IMR-90 (cell line): ENCODE measurements at regions of chr16 and their contacts with region 1.

Region 1: DNA sequence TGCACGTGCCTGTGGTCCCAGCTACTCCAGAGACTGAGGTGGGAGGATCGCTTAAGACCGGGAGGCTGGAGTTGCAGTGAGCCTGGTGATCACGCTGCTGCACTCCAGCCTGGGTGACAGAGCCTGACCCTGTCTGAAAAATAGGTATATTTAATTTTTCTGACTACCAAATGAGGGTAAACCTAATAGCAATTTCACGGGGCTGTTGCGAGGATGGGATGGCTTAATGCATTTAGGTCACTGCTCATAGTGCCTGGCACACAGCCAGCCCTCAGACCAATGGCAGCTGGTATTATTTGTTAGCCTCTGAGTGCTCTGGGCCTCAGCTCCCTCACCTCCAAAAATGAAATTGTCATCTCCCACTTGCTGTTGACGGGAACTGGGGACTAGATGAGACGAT is 5.9 kb upstream of the CDIP1 start:
- DNase-seq: no peak
- ATAC-seq: no peak
- H3K4me3 ChIP-seq: no peak overlapping the region
- H3K27ac ChIP-seq: no peak overlapping the region
- H3K4me1 ChIP-seq: no peaks in the 10 kb centered on the region
- H3K27me3 ChIP-seq: peaks cover 18% of the 10 kb centered on the region
- CTCF ChIP-seq: no peak
- POLR2A ChIP-seq: no peak
- RAD21 ChIP-seq: no peak

Region 2: DNA sequence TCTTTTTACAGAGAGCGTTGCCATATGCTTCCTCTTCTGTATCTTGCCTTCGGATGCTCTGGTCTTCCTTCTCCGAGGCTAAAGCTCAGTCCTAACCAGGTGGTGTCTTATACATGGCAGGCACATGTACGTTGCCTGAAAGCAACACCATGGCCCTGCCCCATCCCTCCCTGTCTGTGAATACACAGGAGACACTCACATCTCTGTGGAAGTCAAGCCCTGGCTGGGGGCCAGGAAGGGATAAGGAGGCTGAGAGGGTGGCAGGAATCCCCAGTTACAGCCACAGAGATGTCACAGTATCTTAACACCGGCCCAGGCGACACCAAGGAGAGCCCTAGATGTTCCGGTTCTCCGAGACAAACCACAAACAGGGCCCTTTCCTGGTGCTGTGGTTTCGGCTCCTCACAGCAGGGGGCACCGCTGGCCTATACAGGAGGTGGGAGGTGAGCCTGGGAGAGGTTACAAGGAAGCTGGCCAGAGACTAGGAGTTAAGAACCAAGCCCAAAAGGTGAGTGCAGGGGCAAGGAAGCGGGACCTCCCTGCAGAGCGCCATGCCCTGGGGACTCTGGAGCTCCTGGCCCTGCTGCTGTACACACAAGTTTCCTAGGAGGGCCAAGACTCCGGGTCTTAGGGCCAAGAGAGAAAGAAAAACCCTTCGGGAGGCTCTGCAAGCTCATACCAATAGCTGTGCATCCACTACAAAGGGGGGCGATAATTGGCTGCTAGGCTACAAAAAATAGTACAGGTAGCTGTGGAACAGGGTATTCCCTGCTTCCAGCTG is 344.3 kb before region 1 on chr16:
- CTCF ChIA-PET with region 1: no interaction called
- POLR2A ChIA-PET with region 1: no interaction called
- dilution Hi-C with region 1: no loop called
- in situ Hi-C with region 1: no loop called
- intact Hi-C with region 1: no loop called
- DNase-seq: peak; percentile 60
- ATAC-seq: peak; percentile 98
- H3K4me3 ChIP-seq: no peak overlapping the region
- H3K27ac ChIP-seq: no peak overlapping the region
- H3K4me1 ChIP-seq: peaks cover 7% of the 10 kb centered on the region
- H3K27me3 ChIP-seq: no peaks in the 10 kb centered on the region
- CTCF ChIP-seq: peak; percentile 87
- POLR2A ChIP-seq: no peak; the same call in 1 of the 2 replicates
- RAD21 ChIP-seq: peak; percentile 93

Region 3: DNA sequence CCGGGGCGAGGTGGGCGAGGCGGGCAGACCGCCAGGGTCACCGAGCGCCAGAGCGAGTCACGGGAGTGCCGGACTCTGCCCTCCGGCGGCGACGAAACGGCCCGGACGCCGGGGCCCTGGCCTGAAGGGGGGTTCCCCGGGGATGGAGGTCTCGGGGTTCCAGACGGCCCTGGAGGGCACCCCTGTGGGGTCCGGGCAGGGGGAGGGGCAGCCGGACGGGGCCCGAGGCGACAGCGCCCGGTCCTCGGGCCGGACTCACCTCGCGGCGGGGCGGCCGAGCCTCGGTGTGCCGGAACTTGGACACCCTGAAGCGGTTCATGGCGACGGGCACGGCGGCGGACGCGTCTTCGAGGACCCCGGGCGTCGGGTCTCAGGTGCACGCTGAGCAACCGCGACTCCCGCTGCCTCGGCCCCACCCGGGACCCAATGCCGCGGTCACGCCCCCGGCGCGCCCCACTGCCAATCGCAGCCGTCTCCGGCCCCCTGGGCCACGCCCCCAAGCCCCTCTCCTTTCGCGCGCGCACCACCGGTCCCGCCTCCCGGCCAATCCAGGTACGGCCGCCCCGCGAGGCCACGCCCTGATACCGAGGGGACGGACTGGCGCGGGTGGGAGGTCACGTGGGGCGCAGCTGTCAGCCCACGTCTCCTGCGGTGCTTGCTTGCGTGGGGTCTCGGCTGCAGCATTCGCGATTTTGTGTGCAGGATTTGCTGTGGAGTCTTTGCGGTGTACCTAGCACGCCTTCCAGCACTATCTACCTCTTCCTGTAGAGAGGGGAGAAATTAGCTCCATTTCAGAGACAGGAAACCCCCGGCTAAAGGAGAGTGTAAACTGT is 128.1 kb before region 1 on chr16 and contains the start of gene CORO7:
- CTCF ChIA-PET with region 1: no interaction called
- POLR2A ChIA-PET with region 1: no interaction called
- dilution Hi-C with region 1: no loop called
- in situ Hi-C with region 1: no loop called
- intact Hi-C with region 1: loop called (anchors 10 kb)
- DNase-seq: peak; percentile 76
- ATAC-seq: peak; percentile 97
- H3K4me3 ChIP-seq: peak within 1 kb of the TSS; percentile 79
- H3K27ac ChIP-seq: peak within 1 kb of the TSS; percentile 65
- H3K4me1 ChIP-seq: peaks cover 9% of the 10 kb centered on the region
- H3K27me3 ChIP-seq: no peaks in the 10 kb centered on the region
- CTCF ChIP-seq: no peak
- POLR2A ChIP-seq: peak; percentile 61
- RAD21 ChIP-seq: no peak
- total RNA-seq, gene CORO7: 6.3 and 7.8 TPM in 2 replicates

Region 4: GRCh38 chr16:4506450-4506849 is 38.0 kb before region 1 on chr16:
- CTCF ChIA-PET with region 1: interaction called, 7 read pairs
- POLR2A ChIA-PET with region 1: no interaction called
- dilution Hi-C with region 1: no loop called
- in situ Hi-C with region 1: loop called (anchors 5 kb)
- intact Hi-C with region 1: loop called (anchors 2 kb)
- DNase-seq: peak; percentile 82
- ATAC-seq: peak; percentile 95
- H3K4me3 ChIP-seq: no peak overlapping the region
- H3K27ac ChIP-seq: no peak overlapping the region
- H3K4me1 ChIP-seq: peaks cover 8% of the 10 kb centered on the region
- H3K27me3 ChIP-seq: no peaks in the 10 kb centered on the region
- CTCF ChIP-seq: peak; percentile 84
- POLR2A ChIP-seq: no peak
- RAD21 ChIP-seq: peak; percentile 91

Region 5: DNA sequence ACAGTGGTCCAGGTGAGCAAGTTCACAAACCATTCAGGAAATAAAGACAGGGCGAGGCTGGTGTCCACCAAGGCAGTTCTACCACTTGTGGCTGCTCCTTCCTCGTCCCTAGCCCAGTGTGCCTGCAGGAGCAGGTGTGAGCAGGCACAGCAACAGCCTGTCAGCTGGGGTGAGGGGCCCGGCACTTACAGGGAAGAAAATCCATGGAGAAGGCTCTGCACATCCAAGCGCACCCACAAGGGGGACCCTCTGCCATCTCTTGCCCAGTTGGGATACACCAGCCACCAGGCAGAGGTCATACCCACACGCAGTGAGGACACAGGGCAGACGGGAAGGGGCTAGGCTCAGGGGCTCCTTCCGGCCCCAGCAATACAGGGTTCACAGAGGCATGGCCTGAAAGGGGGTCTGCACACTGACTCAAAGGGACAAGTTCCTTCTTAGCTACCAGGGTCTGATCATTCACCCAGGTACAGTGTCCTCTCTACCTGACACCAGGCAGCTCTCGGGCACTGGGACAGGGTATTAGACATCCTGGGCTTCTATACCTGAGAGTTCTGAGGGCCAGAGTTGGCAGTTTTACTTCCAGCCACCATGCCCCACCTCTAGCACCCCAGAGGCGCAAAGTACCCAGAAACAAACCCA is 32.9 kb before region 1 on chr16:
- CTCF ChIA-PET with region 1: interaction called, 7 read pairs
- POLR2A ChIA-PET with region 1: no interaction called
- dilution Hi-C with region 1: no loop called
- in situ Hi-C with region 1: loop called (anchors 5 kb)
- intact Hi-C with region 1: loop called (anchors 2 kb)
- DNase-seq: peak; percentile 39
- ATAC-seq: peak; percentile 83
- H3K4me3 ChIP-seq: no peak overlapping the region
- H3K27ac ChIP-seq: no peak overlapping the region
- H3K4me1 ChIP-seq: no peaks in the 10 kb centered on the region
- H3K27me3 ChIP-seq: no peaks in the 10 kb centered on the region
- CTCF ChIP-seq: peak; percentile 51
- POLR2A ChIP-seq: no peak
- RAD21 ChIP-seq: peak; percentile 57

Region 6: GRCh38 chr16:4517812-4518680 is 26.4 kb before region 1 on chr16:
- CTCF ChIA-PET with region 1: no interaction called
- POLR2A ChIA-PET with region 1: no interaction called
- dilution Hi-C with region 1: no loop called
- in situ Hi-C with region 1: loop called (anchors 5 kb)
- intact Hi-C with region 1: loop called (anchors 1 kb)
- DNase-seq: peak; percentile 46
- ATAC-seq: peak; percentile 74
- H3K4me3 ChIP-seq: no peak overlapping the region
- H3K27ac ChIP-seq: no peak overlapping the region
- H3K4me1 ChIP-seq: peaks cover 7% of the 10 kb centered on the region
- H3K27me3 ChIP-seq: no peaks in the 10 kb centered on the region
- CTCF ChIP-seq: peak; percentile 65
- POLR2A ChIP-seq: no peak
- RAD21 ChIP-seq: peak; percentile 79

Region 7: GRCh38 chr16:4616047-4616811 is 71.8 kb after region 1 on chr16:
- CTCF ChIA-PET with region 1: no interaction called
- POLR2A ChIA-PET with region 1: no interaction called
- dilution Hi-C with region 1: no loop called
- in situ Hi-C with region 1: no loop called
- intact Hi-C with region 1: no loop called
- DNase-seq: peak; percentile 100
- ATAC-seq: peak; percentile 85
- H3K4me3 ChIP-seq: peak overlapping the region; percentile 52
- H3K27ac ChIP-seq: peak overlapping the region; percentile 92
- H3K4me1 ChIP-seq: peaks cover 23% of the 10 kb centered on the region
- H3K27me3 ChIP-seq: no peaks in the 10 kb centered on the region
- CTCF ChIP-seq: peak; percentile 46
- POLR2A ChIP-seq: peak; percentile 31; the same call in 1 of the 2 replicates
- RAD21 ChIP-seq: no peak

Region 8: GRCh38 chr16:5498562-5498961 is 954.1 kb after region 1 on chr16:
- CTCF ChIA-PET with region 1: no interaction called
- POLR2A ChIA-PET with region 1: no interaction called
- dilution Hi-C with region 1: no loop called
- in situ Hi-C with region 1: no loop called
- intact Hi-C with region 1: no loop called
- DNase-seq: no peak
- ATAC-seq: no peak
- H3K4me3 ChIP-seq: no peak overlapping the region
- H3K27ac ChIP-seq: no peak overlapping the region
- H3K4me1 ChIP-seq: no peaks in the 10 kb centered on the region
- H3K27me3 ChIP-seq: no peaks in the 10 kb centered on the region
- CTCF ChIP-seq: no peak
- POLR2A ChIP-seq: no peak
- RAD21 ChIP-seq: no peak